ENCODE measurements at regions of chr11 and their contacts with region 1.

Region 1: DNA sequence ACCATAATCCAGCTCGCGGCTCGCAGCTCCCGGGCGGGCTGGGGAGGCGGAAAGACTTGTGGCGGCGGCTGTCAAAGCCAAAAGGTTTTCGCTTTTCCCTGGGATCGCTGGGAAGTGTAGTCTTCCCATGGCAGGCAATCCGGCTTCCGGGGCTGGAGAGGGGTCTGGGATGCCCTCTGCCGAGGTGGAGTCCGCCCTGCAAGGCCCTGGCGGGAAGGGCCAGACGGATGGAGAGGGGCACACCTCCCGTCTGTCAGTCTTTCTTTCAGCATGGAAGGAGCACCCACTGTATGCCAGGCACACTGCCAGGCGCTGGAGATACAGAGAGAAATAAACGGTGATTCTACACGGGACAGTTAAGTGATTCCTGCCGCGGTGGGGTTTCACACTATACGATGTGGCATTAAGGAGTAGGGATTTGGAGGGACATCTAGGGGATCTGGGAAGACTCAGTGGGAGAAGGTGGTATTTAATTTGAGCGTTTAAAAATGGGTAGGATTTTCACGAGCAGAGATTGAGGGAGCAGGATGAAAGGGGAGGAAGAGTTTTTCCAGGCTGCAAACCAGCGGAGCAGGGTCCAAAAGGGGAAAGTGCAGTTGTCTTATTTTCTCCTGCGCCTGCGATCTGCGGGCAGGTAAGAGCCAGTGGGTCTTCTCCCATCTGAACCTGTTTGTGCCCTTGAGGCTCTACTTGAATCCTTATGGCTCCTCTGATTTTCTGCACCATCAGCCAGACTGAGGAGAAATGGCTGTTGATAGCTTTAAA is at the start of gene BACE1:
- DNase-seq: peak; percentile 46
- ATAC-seq: peak; percentile 99
- H3K4me3 ChIP-seq: peak within 1 kb of the TSS; percentile 63 to 81
- H3K27ac ChIP-seq: peak within 1 kb of the TSS; percentile 78
- H3K4me1 ChIP-seq: peaks cover 11% of the 10 kb centered on the region
- H3K27me3 ChIP-seq: no peaks in the 10 kb centered on the region
- CTCF ChIP-seq: no peak; the same call in 1 of the 2 replicates
- total RNA-seq, gene BACE1: 4.9 TPM

Region 2: DNA sequence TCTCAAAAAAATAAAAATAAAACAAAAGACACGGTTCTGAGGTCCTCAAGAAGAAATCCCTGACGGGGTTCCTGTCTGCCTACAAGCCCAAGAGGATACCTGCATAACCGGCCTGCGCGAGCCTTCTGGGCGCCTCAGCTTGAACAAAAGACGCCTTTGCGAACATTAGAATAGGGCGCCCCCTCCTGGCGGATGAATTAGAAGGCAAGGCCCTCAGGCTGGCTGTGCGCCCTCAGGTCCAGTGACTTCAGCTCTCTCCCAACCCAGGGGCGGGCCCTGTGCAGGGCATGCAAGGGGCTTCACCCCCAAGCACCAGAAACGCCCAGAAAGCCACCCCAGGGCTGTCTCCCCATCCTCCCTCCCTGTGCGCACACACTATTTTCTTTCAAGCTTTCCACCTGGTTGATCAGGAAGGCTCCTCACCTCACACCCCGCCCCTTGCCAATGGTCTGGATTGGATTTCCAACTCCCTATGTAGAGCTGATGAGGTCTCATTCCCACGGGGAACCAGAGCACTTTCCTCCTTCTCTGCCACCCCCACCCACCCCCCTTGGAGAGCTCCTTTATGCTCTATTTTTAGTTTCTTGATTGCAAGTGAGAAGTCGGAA is 816.9 kb before region 1 on chr11:
- CTCF ChIA-PET with region 1: no interaction called
- POLR2A ChIA-PET with region 1: interaction called, 12 read pairs
- in situ Hi-C with region 1: no loop called
- intact Hi-C with region 1: no loop called
- DNase-seq: no peak
- ATAC-seq: peak; percentile 90
- H3K4me3 ChIP-seq: no peak overlapping the region
- H3K27ac ChIP-seq: no peak overlapping the region
- H3K4me1 ChIP-seq: no peaks in the 10 kb centered on the region
- H3K27me3 ChIP-seq: 0 out of 2 replicates have a peak, but pooled peaks cover 3% of the 10 kb centered on the region
- CTCF ChIP-seq: peak; percentile 92

Region 3: GRCh38 chr11:116913000-116913399 is 403.4 kb before region 1 on chr11:
- CTCF ChIA-PET with region 1: no interaction called
- POLR2A ChIA-PET with region 1: no interaction called
- in situ Hi-C with region 1: no loop called
- intact Hi-C with region 1: no loop called
- DNase-seq: no peak
- ATAC-seq: no peak
- H3K4me3 ChIP-seq: no peak overlapping the region
- H3K27ac ChIP-seq: no peak overlapping the region
- H3K4me1 ChIP-seq: peaks cover 5% of the 10 kb centered on the region; the same call in 1 of the 2 replicates
- H3K27me3 ChIP-seq: no peaks in the 10 kb centered on the region
- CTCF ChIP-seq: no peak

Region 4: GRCh38 chr11:117239300-117239699 is 77.1 kb before region 1 on chr11:
- CTCF ChIA-PET with region 1: interaction called, 3 read pairs
- POLR2A ChIA-PET with region 1: no interaction called
- in situ Hi-C with region 1: no loop called
- intact Hi-C with region 1: loop called (anchors 5 kb)
- DNase-seq: no peak
- ATAC-seq: peak; percentile 83
- H3K4me3 ChIP-seq: no peak overlapping the region
- H3K27ac ChIP-seq: no peak overlapping the region
- H3K4me1 ChIP-seq: peaks cover under 1% of the 10 kb centered on the region
- H3K27me3 ChIP-seq: no peaks in the 10 kb centered on the region
- CTCF ChIP-seq: no peak

Region 5: DNA sequence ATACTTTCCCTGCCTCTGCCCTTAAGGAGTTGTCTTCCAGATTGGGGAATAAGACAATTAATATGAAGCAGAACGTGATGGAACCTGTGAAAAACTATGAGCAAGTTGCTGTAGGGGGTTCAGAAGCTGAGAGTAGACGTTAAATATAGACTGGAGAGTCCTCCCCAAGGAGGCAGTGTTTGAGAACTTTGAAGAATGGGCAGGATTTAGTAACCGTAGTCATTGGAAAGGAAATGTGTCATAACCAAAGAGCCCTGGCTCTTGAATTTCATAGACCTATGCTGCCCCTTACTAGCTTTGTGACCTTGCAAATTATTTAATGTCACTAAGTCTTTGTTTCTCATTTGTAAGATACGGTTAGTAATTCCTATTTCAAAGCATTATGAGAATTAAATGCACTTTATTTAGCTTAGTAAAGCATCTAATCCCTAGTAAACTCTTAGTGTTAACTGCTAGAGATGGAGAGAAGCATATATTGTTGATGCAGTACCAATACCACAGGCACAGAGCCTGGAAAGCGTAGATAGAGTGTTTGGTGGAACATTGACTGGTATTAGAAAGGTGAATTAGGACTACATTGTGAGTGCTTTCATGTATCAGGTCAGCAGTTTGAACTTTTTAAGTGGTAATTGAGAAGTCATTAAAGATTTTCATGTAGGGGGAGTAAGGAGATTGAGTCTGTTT is 1946.4 kb after region 1 on chr11:
- CTCF ChIA-PET with region 1: no interaction called
- POLR2A ChIA-PET with region 1: no interaction called
- in situ Hi-C with region 1: no loop called
- intact Hi-C with region 1: no loop called
- DNase-seq: no peak
- ATAC-seq: peak; percentile 60
- H3K4me3 ChIP-seq: no peak overlapping the region
- H3K27ac ChIP-seq: no peak overlapping the region
- H3K4me1 ChIP-seq: peaks cover 14% of the 10 kb centered on the region
- H3K27me3 ChIP-seq: no peaks in the 10 kb centered on the region
- CTCF ChIP-seq: no peak

Measured in Panc1 (cell line).